ENCODE measurements at regions of chr4 and their contacts with region 1.

Region 1: GRCh38 chr4:23163647-23164436 is 471.1 kb downstream of the GBA3 start:
- DNase-seq: no peak
- ATAC-seq: no peak

Region 2: DNA sequence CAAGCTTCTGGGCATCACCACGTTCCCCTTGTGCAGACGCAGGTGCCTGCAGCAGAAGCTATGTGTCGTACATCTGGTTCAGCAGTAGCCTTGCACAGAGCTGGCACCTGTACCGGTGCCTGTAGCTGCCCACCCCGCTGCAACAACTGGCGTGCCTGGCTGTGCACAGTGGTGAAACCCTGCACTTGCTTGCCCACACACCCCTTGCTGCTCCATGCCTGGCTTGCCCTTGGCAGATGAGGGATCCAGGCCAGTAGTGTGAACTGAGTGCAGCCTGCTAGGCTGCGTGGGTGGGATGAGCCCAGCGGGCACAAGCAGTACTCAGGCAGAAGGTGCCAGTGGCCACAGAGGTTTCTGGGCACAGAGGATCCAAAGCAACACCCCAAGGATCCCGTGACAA is 197.6 kb after region 1 on chr4:
- intact Hi-C with region 1: no loop called
- DNase-seq: no peak
- ATAC-seq: no peak

Region 3: GRCh38 chr4:24015782-24016181 is 851.9 kb after region 1 on chr4:
- intact Hi-C with region 1: loop called (anchors 5 kb)
- DNase-seq: no peak
- ATAC-seq: no peak